Upper lobe of right lung (tissue), 1 donor: ENCODE measurements at regions of chr17 and their contacts with region 1.

Region 1: GRCh38 chr17:43779145-43780125 is 658 bp upstream of the DUSP3 start:
- DNase-seq: no peak
- ATAC-seq: peak; percentile 11
- H3K4me3 ChIP-seq: peak overlapping the region; percentile 99
- H3K27ac ChIP-seq: peak overlapping the region; percentile 100
- H3K4me1 ChIP-seq: peaks cover 40% of the 10 kb centered on the region
- H3K27me3 ChIP-seq: no peaks in the 10 kb centered on the region
- CTCF ChIP-seq: no peak

Region 2: GRCh38 chr17:43846221-43846712 is 66.8 kb after region 1 on chr17:
- intact Hi-C with region 1: loop called (anchors 10 kb)
- DNase-seq: peak; percentile 92
- ATAC-seq: peak; percentile 97
- H3K4me3 ChIP-seq: no peak overlapping the region
- H3K27ac ChIP-seq: no peak overlapping the region
- H3K4me1 ChIP-seq: peaks cover 12% of the 10 kb centered on the region
- H3K27me3 ChIP-seq: no peaks in the 10 kb centered on the region
- CTCF ChIP-seq: peak; percentile 99